ENCODE measurements at regions of chr4 and their contacts with region 1.

Region 1: GRCh38 chr4:75995727-75996126 is 5.0 kb upstream of the SDAD1 start:
- DNase-seq: peak; percentile 44 to 77 (median 66)
- H3K4me3 ChIP-seq: no peak overlapping the region
- H3K27ac ChIP-seq: no peak overlapping the region
- H3K4me1 ChIP-seq: peaks cover 0 to 5% (median 2%) of the 10 kb centered on the region in 4 experiments
- H3K27me3 ChIP-seq: peaks cover 0 to 3% (median 0%) of the 10 kb centered on the region in 5 experiments

Region 2: GRCh38 chr4:75325318-75325979 is 670.3 kb before region 1 on chr4:
- CTCF ChIA-PET with region 1: no interaction called
- POLR2A ChIA-PET with region 1: no interaction called
- DNase-seq: no peak
- H3K4me3 ChIP-seq: no peak overlapping the region
- H3K27ac ChIP-seq: no peak overlapping the region
- H3K4me1 ChIP-seq: no peaks in the 10 kb centered on the region
- H3K27me3 ChIP-seq: peaks cover 0 to 2% (median 0%) of the 10 kb centered on the region in 5 experiments

Region 3: DNA sequence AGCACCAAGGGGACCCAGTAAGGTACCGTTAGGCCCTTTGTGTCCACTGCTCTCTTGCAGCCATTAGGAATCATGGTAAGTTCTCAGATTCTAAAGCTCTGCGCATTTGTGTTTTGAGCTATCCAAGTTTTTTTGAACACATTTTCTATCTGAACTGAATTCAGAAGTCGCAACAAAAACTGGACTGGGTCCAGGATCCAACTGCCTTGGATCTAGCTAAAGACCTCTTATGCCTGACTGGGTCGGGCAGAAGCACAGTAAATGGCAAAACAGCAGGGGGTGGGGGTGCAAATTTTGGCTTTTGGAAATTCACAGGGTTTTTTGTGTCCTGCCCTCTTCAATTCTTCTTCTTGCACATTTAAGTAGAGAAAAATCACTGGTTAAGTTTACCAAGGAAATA is 511.5 kb before region 1 on chr4:
- CTCF ChIA-PET with region 1: no interaction called
- POLR2A ChIA-PET with region 1: no interaction called
- DNase-seq: no peak
- H3K4me3 ChIP-seq: no peak overlapping the region
- H3K27ac ChIP-seq: no peak overlapping the region
- H3K4me1 ChIP-seq: no peaks in the 10 kb centered on the region
- H3K27me3 ChIP-seq: no peaks in the 10 kb centered on the region

Region 4: DNA sequence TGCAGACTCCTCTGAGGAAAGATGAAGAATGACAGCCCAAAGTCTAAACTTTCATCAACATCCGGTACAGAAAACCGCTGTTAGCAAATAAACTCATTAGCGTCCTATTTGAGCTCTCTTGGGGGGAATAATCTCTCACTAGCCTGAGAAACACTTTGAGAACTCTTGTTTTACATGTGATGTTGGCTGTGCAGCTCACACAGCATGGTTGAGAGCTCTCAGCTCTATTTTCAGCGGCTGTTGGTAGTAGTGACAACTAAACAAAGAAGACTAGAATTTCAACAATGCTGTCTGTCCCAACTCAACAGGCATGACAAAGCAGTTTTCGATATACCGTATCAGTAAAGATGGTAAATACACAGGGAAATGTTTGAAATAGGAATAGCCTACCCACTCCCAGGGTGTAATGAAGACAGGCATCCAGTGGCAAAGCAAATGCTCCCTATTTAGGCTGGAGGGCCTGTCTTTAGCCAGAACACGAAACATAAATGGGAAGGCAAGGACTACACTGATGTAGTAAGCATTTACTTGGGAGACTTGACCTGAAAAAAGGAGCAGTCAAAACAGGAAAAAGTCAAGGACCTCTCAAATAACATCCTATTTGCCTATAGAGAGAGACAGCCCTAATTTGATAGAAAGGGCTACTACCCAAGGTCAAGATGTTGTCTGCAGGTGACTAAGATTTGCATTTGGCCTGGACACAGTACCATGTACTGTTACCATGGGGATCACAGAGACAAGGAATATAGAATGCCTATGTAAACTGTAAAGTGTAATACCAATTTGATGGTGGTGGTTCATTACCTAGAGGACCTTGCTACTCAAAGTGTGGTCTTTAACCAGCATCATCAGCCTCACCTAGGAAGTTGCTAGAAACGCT is 153.8 kb before region 1 on chr4:
- CTCF ChIA-PET with region 1: no interaction called
- POLR2A ChIA-PET with region 1: no interaction called
- DNase-seq: peak in 1 of 3 donors; percentile 17
- H3K4me3 ChIP-seq: no peak overlapping the region
- H3K27ac ChIP-seq: no peak overlapping the region
- H3K4me1 ChIP-seq: peaks cover 0 to 6% (median 0%) of the 10 kb centered on the region in 4 experiments
- H3K27me3 ChIP-seq: no peaks in the 10 kb centered on the region

Region 5: GRCh38 chr4:75985116-75985515 is 10.6 kb before region 1 on chr4:
- CTCF ChIA-PET with region 1: interaction called, 13 read pairs
- POLR2A ChIA-PET with region 1: no interaction called
- DNase-seq: no peak
- H3K4me3 ChIP-seq: no peak overlapping the region
- H3K27ac ChIP-seq: no peak overlapping the region
- H3K4me1 ChIP-seq: peaks cover 7 to 14% (median 9%) of the 10 kb centered on the region in 4 experiments
- H3K27me3 ChIP-seq: no peaks in the 10 kb centered on the region

Region 6: DNA sequence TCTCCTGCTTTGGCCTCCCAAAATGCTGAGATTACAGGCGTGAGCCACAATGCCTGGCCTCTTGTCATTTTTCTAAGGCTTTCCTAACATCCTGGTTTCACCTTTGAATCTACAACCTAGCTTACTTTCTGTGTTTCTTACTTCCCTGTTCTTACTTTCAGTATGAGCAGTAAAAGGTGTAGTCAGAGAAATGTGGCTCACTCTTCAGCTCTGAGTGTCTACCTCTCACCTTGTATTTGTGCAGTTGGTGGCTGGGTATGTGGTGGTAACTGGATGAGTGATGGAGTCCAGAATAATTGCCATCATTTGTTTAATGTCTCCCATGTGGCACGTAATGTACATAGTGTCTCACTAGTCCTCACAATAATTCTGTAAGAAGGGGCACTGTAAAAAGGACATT is 59.3 kb after region 1 on chr4:
- CTCF ChIA-PET with region 1: interaction called, 15 read pairs
- POLR2A ChIA-PET with region 1: no interaction called
- DNase-seq: no peak
- H3K4me3 ChIP-seq: no peak overlapping the region
- H3K27ac ChIP-seq: no peak overlapping the region
- H3K4me1 ChIP-seq: no peaks in the 10 kb centered on the region
- H3K27me3 ChIP-seq: no peaks in the 10 kb centered on the region

Region 7: DNA sequence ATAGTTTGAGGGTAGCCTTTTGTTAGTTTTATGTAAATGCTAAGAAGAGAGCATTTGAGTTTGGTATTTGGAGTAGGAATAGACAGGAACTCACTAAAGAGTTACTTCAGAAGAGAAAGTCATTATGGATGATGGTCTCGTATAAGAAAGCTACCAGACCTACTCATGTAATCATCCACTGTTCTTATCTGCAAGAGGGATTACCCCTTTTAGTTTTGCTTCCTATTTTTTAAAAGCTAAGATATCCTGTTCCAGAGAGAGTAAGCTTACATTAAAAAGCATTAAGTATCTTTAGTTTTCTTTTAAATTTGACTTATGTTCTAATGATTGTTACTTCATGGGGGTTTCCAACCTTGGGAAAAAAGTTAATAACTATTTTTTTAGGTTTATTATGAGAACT is 66.3 kb after region 1 on chr4:
- CTCF ChIA-PET with region 1: interaction called, 41 read pairs
- POLR2A ChIA-PET with region 1: no interaction called
- DNase-seq: peak in 2 of 3 donors; percentile 26 to 38
- H3K4me3 ChIP-seq: no peak overlapping the region
- H3K27ac ChIP-seq: no peak overlapping the region
- H3K4me1 ChIP-seq: no peaks in the 10 kb centered on the region
- H3K27me3 ChIP-seq: no peaks in the 10 kb centered on the region

Region 8: GRCh38 chr4:76067652-76068286 is 72.0 kb after region 1 on chr4:
- CTCF ChIA-PET with region 1: interaction called, 41 read pairs
- POLR2A ChIA-PET with region 1: no interaction called
- DNase-seq: peak; percentile 72 to 88 (median 80)
- H3K4me3 ChIP-seq: no peak overlapping the region
- H3K27ac ChIP-seq: no peak overlapping the region
- H3K4me1 ChIP-seq: no peaks in the 10 kb centered on the region
- H3K27me3 ChIP-seq: no peaks in the 10 kb centered on the region

Region 9: GRCh38 chr4:76087007-76087769 is 91.5 kb after region 1 on chr4:
- CTCF ChIA-PET with region 1: interaction called, 35 read pairs
- POLR2A ChIA-PET with region 1: no interaction called
- DNase-seq: peak; percentile 44 to 61 (median 60)
- H3K4me3 ChIP-seq: no peak overlapping the region
- H3K27ac ChIP-seq: no peak overlapping the region
- H3K4me1 ChIP-seq: peaks cover 0 to 13% (median 8%) of the 10 kb centered on the region in 4 experiments
- H3K27me3 ChIP-seq: no peaks in the 10 kb centered on the region